Heart right ventricle (tissue), 16 donors: ENCODE measurements at regions of chr9 and their contacts with region 1.

Region 1: GRCh38 chr9:69961830-69962229 is 81.8 kb upstream of the MAMDC2 start:
- DNase-seq: no peak
- ATAC-seq: no peak
- H3K4me3 ChIP-seq: no peak overlapping the region
- H3K27ac ChIP-seq: no peak overlapping the region
- H3K4me1 ChIP-seq: no peaks in the 10 kb centered on the region
- H3K27me3 ChIP-seq: peaks cover 0 to 9% (median 0%) of the 10 kb centered on the region in 7 donors
- CTCF ChIP-seq: no peak

Region 2: DNA sequence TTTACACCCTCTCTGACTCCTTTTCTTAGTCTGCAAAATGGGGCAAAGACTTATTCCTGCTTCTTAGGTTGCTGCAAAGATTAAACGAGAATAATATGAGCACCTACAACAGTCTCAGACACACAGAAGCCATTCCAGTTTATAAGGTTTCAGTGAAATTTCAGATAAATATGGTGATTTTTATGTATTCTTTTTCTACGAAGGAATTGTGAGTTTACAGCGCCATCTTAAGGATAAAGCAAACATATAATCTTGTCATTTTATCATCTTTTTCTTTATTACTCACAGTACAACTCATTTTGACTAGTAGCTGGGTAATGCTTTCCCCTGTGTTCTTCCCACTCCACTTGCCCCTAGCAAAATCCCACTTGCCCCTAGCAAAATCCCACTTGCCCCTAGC is 267.7 kb after region 1 on chr9:
- intact Hi-C with region 1: loop called in 2 of 10 experiments (anchors 5 to 10 kb)
- DNase-seq: no peak
- ATAC-seq: peak in 4 of 8 donors; percentile 20 to 60 (median 42)
- H3K4me3 ChIP-seq: peak overlapping the region in 2 of 10 donors; percentile 16 to 21
- H3K27ac ChIP-seq: peak overlapping the region in 4 of 10 donors; percentile 2 to 64 (median 42)
- H3K4me1 ChIP-seq: peaks cover 0 to 19% (median 8%) of the 10 kb centered on the region in 9 donors
- H3K27me3 ChIP-seq: no peaks in the 10 kb centered on the region
- CTCF ChIP-seq: peak in 6 of 9 donors; percentile 7 to 55 (median 42)